ENCODE measurements at regions of chr11 and their contacts with region 1.

Region 1: GRCh38 chr11:59658036-59658435 is 10.8 kb downstream of the PATL1 start:
- DNase-seq: no peak
- ATAC-seq: no peak
- H3K4me3 ChIP-seq: no peak overlapping the region
- H3K4me3 Mint-ChIP-seq: no peak overlapping the region
- H3K27ac ChIP-seq: no peak overlapping the region
- H3K27ac Mint-ChIP-seq: no peak overlapping the region
- H3K4me1 ChIP-seq: peaks cover 0 to 3% of the 10 kb centered on the region in 2 experiments
- H3K4me1 Mint-ChIP-seq: peaks cover 18 to 20% (median 19%) of the 10 kb centered on the region in 3 donors
- H3K27me3 ChIP-seq: no peaks in the 10 kb centered on the region
- H3K27me3 Mint-ChIP-seq: no peaks in the 10 kb centered on the region

Region 2: DNA sequence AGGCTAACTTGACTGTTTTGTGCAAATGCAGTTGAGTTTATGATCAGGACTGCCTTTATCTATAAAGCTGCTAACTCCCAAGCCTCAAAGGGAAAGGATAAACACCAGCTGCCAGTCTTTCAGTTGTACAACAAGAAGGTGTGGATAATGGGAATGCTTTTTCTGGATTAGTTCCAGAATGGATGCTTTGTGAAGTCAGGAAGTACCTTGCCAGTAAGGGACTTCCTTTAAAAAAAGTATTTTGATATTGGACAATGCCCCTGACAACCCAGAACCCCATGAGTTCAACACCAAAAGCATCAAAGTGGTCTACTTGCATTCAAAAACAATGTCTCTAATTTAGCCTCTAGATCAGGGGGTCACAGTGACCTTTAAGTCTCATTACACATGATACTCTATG is 263.9 kb before region 1 on chr11:
- CTCF ChIA-PET with region 1: no interaction called
- POLR2A ChIA-PET with region 1: no interaction called
- DNase-seq: no peak
- ATAC-seq: no peak
- H3K4me3 ChIP-seq: no peak overlapping the region
- H3K4me3 Mint-ChIP-seq: no peak overlapping the region
- H3K27ac ChIP-seq: no peak overlapping the region
- H3K27ac Mint-ChIP-seq: no peak overlapping the region
- H3K4me1 ChIP-seq: no peaks in the 10 kb centered on the region
- H3K4me1 Mint-ChIP-seq: no peaks in the 10 kb centered on the region
- H3K27me3 ChIP-seq: no peaks in the 10 kb centered on the region
- H3K27me3 Mint-ChIP-seq: peaks cover 16 to 19% of the 10 kb centered on the region in 2 donors

Region 3: GRCh38 chr11:59607703-59608454 is 50.2 kb before region 1 on chr11:
- CTCF ChIA-PET with region 1: interaction called in 1 of 2 experiments, 15 read pairs
- POLR2A ChIA-PET with region 1: interaction called in 1 of 2 experiments, 5 read pairs
- DNase-seq: no peak
- ATAC-seq: no peak
- H3K4me3 ChIP-seq: no peak overlapping the region
- H3K4me3 Mint-ChIP-seq: no peak overlapping the region
- H3K27ac ChIP-seq: no peak overlapping the region
- H3K27ac Mint-ChIP-seq: no peak overlapping the region
- H3K4me1 ChIP-seq: peaks cover 1 to 5% of the 10 kb centered on the region in 2 experiments
- H3K4me1 Mint-ChIP-seq: peaks cover 52 to 70% (median 57%) of the 10 kb centered on the region in 3 donors
- H3K27me3 ChIP-seq: no peaks in the 10 kb centered on the region
- H3K27me3 Mint-ChIP-seq: no peaks in the 10 kb centered on the region